ENCODE measurements at regions of chr1 and their contacts with region 1.

Region 1: GRCh38 chr1:241998412-241998921 is 431 bp downstream of the MAP1LC3C start:
- H3K4me3 ChIP-seq: peak overlapping the region; percentile 19
- H3K27ac ChIP-seq: no peak overlapping the region
- H3K4me1 ChIP-seq: no peaks in the 10 kb centered on the region
- CTCF ChIP-seq: peak; percentile 66

Region 2: GRCh38 chr1:241810769-241811405 is 187.6 kb before region 1 on chr1:
- CTCF ChIA-PET with region 1: no interaction called
- POLR2A ChIA-PET with region 1: no interaction called
- H3K4me3 ChIP-seq: no peak overlapping the region
- H3K27ac ChIP-seq: no peak overlapping the region
- H3K4me1 ChIP-seq: no peaks in the 10 kb centered on the region
- CTCF ChIP-seq: no peak

Region 3: DNA sequence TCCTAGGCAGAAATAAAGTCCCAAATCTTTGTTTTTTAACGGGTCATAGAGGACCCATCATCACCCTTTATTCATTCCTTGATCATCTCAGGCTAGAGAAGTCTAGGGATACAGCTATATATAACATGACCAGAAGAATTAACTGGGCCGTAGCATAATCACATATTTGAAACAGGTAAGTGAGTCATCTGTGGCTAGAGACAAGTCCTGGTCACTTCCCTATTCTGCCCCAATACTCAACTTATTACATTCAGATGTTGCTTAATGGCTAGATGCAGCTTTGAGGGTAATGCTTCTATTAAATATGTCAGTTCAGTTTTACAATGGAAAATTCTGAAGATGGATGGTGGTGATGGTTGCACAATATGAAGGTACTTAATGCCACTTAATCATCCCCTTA is 103.5 kb before region 1 on chr1:
- CTCF ChIA-PET with region 1: interaction called, 29 read pairs
- POLR2A ChIA-PET with region 1: interaction called, 3 read pairs
- H3K4me3 ChIP-seq: no peak overlapping the region
- H3K27ac ChIP-seq: no peak overlapping the region
- H3K4me1 ChIP-seq: no peaks in the 10 kb centered on the region
- CTCF ChIP-seq: no peak

Region 4: DNA sequence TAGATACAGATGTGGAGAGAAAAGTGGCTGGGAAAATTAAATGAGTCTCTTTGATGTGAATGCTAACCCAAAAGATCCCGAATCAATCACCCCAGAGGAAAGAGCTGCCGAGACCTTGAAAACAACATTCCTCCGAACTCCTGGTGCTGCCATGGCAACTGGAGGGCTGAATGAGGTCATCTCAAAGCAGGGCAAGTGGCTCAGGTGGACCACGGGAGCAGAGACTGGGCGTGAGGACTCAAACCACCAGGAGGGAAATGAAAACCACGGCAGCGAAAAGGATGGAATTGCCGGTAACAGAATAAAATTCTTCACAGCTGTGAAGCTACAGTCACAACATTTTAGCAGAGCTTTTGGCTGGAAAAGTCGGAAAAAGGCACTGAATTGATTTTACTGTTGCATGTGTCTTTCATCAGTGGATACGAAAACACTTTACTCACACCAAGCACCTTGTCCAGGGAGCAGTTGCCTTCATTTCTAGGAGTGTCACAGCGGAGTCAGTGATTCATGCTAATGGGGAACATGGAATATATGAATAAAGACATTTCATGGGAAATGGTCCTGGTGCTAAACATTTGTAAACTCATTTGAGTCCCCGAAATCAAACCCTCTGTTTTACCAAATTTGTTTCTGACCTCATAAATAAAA is 64.1 kb before region 1 on chr1:
- CTCF ChIA-PET with region 1: interaction called, 14 read pairs
- POLR2A ChIA-PET with region 1: no interaction called
- H3K4me3 ChIP-seq: no peak overlapping the region
- H3K27ac ChIP-seq: no peak overlapping the region
- H3K4me1 ChIP-seq: no peaks in the 10 kb centered on the region
- CTCF ChIP-seq: no peak

Region 5: DNA sequence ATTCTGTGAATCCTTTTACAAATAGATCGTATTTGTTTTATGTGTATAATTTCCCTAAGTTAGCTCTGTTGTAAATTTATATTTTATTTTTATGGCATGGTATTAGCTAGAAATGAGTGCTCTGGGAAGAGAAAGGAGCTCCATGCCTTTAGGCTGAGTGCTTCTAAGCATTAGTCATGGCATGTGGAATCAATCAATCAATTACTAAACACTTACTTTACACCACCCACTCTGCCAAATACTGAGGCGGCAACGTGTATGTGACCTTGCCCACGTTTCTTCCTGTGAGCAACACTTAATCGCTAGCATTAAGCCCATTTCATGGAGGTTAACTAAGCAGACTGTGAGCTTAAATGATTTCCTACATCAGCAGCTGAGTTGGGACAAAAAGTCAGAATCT is 48.1 kb before region 1 on chr1:
- CTCF ChIA-PET with region 1: interaction called, 10 read pairs
- POLR2A ChIA-PET with region 1: no interaction called
- H3K4me3 ChIP-seq: no peak overlapping the region
- H3K27ac ChIP-seq: no peak overlapping the region
- H3K4me1 ChIP-seq: no peaks in the 10 kb centered on the region
- CTCF ChIP-seq: no peak

Region 6: DNA sequence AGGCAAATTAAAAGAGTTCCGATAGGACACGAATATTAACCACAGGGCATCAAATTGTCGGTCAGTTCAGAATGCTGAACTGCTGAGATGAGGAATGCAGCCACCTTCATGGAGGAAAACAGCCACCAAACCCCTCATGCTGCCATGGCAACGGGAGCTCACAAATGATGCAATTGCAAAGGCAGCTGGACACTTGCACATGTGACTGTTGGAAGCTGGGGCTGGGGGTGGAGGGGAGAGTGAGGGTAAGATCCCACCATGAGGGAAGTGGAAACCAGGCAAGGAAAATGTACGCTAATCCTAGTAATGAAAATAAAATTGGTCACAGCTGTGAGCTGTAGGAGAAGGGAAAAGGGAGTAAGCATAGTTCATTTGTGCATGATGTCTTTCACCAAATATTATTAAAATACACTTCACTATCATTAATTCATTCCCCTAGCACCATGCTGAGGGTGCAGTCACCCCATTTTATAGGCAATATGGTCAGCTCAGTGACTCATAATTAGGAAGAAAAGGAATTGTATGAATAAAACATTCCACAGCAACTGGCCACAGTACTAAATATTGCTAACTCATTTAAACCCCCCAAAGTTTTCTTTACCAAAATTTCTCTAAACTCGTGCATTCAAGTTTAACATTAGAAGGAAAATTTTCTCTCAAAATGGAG is 25.6 kb before region 1 on chr1:
- CTCF ChIA-PET with region 1: interaction called, 13 read pairs
- POLR2A ChIA-PET with region 1: interaction called, 4 read pairs
- H3K4me3 ChIP-seq: no peak overlapping the region
- H3K27ac ChIP-seq: no peak overlapping the region
- H3K4me1 ChIP-seq: no peaks in the 10 kb centered on the region
- CTCF ChIP-seq: no peak

Region 7: DNA sequence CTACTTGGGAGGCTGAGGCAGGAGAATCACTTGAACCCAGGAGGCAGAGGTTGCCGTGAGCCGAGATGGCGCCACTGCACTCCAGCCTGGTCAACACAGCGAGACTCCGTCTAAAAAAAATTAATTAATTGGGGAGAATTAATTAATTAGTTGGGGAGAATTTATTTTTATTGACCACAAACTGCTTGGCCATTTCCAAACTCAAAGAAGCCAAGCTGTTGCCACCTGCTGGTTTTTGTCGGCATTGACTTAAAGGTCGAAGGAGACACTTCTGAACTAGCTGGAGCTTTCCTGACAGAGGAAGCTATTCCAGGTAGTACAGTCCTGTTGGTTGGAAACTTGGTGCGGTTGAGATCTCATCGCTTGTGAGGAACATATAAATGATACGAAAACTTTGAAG is 12.7 kb before region 1 on chr1:
- CTCF ChIA-PET with region 1: interaction called, 32 read pairs
- POLR2A ChIA-PET with region 1: no interaction called
- H3K4me3 ChIP-seq: no peak overlapping the region
- H3K27ac ChIP-seq: no peak overlapping the region
- H3K4me1 ChIP-seq: peaks cover 15% of the 10 kb centered on the region
- CTCF ChIP-seq: peak; percentile 27

Region 8: DNA sequence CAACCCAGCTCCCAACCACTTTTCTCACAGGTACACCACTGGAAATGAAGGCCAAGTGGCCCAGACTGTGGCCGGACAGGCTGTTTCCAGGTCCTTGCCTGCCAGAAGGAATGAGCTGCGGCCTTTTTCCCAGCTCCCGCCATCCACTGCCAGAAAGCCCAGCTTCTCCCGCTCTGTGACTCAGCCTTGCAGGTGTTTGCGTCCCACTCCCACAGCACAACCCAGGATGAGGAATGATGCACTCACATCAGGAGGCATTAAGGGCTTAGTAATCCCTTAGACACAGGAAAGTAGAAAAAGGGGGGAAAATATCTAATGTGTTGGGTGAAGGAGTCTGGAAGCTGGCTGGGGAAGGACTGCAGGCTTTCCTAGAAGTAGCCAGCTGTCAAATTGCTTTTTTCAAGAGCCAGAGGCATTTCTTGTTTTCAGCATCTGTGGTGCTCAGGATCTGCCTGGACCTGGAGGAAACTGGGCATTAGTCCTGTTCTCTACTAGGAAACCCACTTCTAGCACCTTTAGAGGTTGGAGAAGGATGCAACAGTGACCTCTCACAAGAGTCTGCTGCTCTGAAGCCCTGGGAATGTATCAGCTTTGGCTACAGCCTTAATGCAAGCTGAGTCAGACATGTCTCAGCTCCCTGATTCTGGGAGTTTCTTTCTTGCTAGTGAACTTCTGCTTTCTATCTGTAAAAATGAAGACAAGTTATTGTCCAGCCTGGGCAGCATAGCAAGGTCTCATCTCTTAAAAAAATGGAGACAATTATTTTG is 13.6 kb after region 1 on chr1:
- CTCF ChIA-PET with region 1: interaction called, 37 read pairs
- POLR2A ChIA-PET with region 1: no interaction called
- H3K4me3 ChIP-seq: no peak overlapping the region
- H3K27ac ChIP-seq: no peak overlapping the region
- H3K4me1 ChIP-seq: no peaks in the 10 kb centered on the region
- CTCF ChIP-seq: no peak

Region 9: DNA sequence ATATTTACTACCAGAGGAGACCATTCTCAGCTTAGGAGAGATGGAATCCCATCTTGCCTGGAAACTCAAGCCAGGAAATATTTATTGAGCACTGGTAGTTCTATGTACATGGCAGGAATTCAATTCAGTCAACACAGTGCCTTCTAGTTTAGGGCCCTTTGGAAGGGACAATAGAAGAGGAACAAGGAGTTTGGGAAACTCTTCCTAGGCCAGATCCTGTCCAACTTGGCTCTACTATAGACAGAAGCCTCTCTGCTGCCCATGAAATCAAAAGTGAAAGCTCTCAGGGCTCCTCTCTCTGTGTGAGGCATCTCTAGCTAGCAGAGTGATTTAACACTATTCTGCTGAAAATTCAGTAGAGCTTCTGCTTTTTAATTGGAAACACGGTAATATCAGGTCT is 245.0 kb after region 1 on chr1:
- CTCF ChIA-PET with region 1: no interaction called
- POLR2A ChIA-PET with region 1: no interaction called
- H3K4me3 ChIP-seq: no peak overlapping the region
- H3K27ac ChIP-seq: no peak overlapping the region
- H3K4me1 ChIP-seq: peaks cover 5% of the 10 kb centered on the region; the same call in 1 of the 2 replicates
- CTCF ChIP-seq: no peak